Activated CD4-positive, alpha-beta T cell treated with anti-CD3 and anti-CD28 coated beads for 36 hours (primary cell): ENCODE measurements at regions of chr1 and their contacts with region 1.

Region 1: GRCh38 chr1:145978854-145979759 is 14.6 kb downstream of the POLR3GL start:
- DNase-seq: peak; percentile 91
- ATAC-seq: peak; percentile 86
- H3K4me3 Mint-ChIP-seq: no peak overlapping the region
- H3K27ac Mint-ChIP-seq: no peak overlapping the region
- H3K4me1 Mint-ChIP-seq: peaks cover 5% of the 10 kb centered on the region
- H3K27me3 Mint-ChIP-seq: no peaks in the 10 kb centered on the region

Region 2: GRCh38 chr1:145823565-145824498 is 155.3 kb before region 1 on chr1 and contains the starts of genes POLR3C and RNF115:
- CTCF ChIA-PET with region 1: interaction called, 3 read pairs
- POLR2A ChIA-PET with region 1: interaction called, 12 read pairs
- intact Hi-C with region 1: no loop called
- DNase-seq: peak; percentile 91
- ATAC-seq: peak; percentile 67
- H3K4me3 Mint-ChIP-seq: peak within 1 kb of the TSS; percentile 97
- H3K27ac Mint-ChIP-seq: peak within 1 kb of the TSS; percentile 98
- H3K4me1 Mint-ChIP-seq: peaks cover 44% of the 10 kb centered on the region
- H3K27me3 Mint-ChIP-seq: no peaks in the 10 kb centered on the region
- total RNA-seq, gene POLR3C: 34.2 to 42.6 TPM
- total RNA-seq, gene RNF115: 11.8 to 13.9 TPM

Region 3: GRCh38 chr1:145871994-145872924 is 106.8 kb before region 1 on chr1:
- CTCF ChIA-PET with region 1: no interaction called
- POLR2A ChIA-PET with region 1: no interaction called
- intact Hi-C with region 1: no loop called
- DNase-seq: peak; percentile 58
- ATAC-seq: peak; percentile 81
- H3K4me3 Mint-ChIP-seq: peak overlapping the region; percentile 63
- H3K27ac Mint-ChIP-seq: peak overlapping the region; percentile 61
- H3K4me1 Mint-ChIP-seq: peaks cover 11% of the 10 kb centered on the region
- H3K27me3 Mint-ChIP-seq: peaks cover 10% of the 10 kb centered on the region

Region 4: GRCh38 chr1:145927063-145927886 is 51.8 kb before region 1 on chr1 and contains the start of gene RBM8A:
- CTCF ChIA-PET with region 1: interaction called, 17 read pairs
- POLR2A ChIA-PET with region 1: interaction called, 3 read pairs
- intact Hi-C with region 1: loop called (anchors 1 to 2 kb)
- DNase-seq: peak; percentile 96
- ATAC-seq: peak; percentile 97
- H3K4me3 Mint-ChIP-seq: no peak within 1 kb of the TSS
- H3K27ac Mint-ChIP-seq: no peak within 1 kb of the TSS
- H3K4me1 Mint-ChIP-seq: peaks cover 28% of the 10 kb centered on the region
- H3K27me3 Mint-ChIP-seq: no peaks in the 10 kb centered on the region
- total RNA-seq, gene RBM8A: 293 to 330 TPM

Region 5: DNA sequence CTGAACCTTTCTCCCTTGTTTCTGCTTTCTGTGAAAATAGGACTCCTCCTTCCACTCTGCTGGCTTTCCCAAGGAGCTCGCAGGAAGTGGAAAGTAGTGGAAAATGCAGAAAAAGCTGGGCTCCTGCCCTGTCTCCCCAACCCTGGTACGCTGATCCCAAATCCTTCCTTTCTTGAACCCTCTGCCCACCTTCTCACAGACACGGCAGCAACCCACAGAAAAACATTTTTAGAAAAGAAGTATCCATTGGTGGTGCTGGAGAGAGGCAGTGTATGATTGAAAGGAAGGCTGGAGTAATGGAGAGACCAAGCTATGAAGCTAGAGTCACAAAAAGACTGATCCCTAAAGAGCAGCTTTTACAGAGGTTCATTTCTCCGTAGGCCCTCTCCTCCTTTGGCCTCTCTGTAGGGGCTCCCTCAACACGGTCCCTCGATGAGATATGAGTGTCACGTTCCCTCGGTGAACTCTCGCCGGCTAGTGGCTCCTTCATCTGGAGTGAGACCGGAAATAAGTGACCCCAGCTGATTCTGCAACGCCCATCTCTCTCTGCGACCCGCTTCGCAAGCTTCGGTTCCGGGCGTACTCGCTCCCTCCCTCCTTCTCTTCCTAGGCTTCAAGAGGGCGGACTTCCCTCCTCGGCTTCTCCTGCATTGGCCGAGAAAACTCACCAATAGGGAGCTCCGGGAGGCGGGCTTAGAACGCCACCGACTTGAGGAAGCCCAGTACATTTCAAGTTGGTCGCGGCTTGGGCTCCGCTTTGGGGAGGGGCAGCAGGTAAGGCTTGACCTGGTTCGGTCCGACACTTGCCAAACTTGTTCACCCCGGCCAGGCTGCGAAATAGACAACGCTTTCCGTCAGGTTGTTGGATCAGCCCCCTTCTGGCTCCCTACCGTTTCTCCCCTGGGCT is 14.9 kb before region 1 on chr1 and contains the starts of genes ANKRD34A and POLR3GL:
- CTCF ChIA-PET with region 1: interaction called, 46 read pairs
- POLR2A ChIA-PET with region 1: interaction called, 14 read pairs
- intact Hi-C with region 1: loop called (anchors 1 to 2 kb)
- DNase-seq: peak; percentile 95
- ATAC-seq: peak; percentile 88
- H3K4me3 Mint-ChIP-seq: peak within 1 kb of the TSS; percentile 85
- H3K27ac Mint-ChIP-seq: peak within 1 kb of the TSS; percentile 87
- H3K4me1 Mint-ChIP-seq: peaks cover 33% of the 10 kb centered on the region
- H3K27me3 Mint-ChIP-seq: no peaks in the 10 kb centered on the region
- total RNA-seq, gene ANKRD34A: 5.8 to 6.1 TPM
- total RNA-seq, gene POLR3GL: 19.3 to 22.4 TPM

Region 6: GRCh38 chr1:146007506-146008133 is 28.5 kb after region 1 on chr1:
- CTCF ChIA-PET with region 1: interaction called, 119 read pairs
- POLR2A ChIA-PET with region 1: interaction called, 5 read pairs
- intact Hi-C with region 1: loop called (anchors 1 kb)
- DNase-seq: no peak
- ATAC-seq: no peak
- H3K4me3 Mint-ChIP-seq: peak overlapping the region; percentile 58
- H3K27ac Mint-ChIP-seq: peak overlapping the region; percentile 76
- H3K4me1 Mint-ChIP-seq: peaks cover 38% of the 10 kb centered on the region
- H3K27me3 Mint-ChIP-seq: no peaks in the 10 kb centered on the region

Region 7: DNA sequence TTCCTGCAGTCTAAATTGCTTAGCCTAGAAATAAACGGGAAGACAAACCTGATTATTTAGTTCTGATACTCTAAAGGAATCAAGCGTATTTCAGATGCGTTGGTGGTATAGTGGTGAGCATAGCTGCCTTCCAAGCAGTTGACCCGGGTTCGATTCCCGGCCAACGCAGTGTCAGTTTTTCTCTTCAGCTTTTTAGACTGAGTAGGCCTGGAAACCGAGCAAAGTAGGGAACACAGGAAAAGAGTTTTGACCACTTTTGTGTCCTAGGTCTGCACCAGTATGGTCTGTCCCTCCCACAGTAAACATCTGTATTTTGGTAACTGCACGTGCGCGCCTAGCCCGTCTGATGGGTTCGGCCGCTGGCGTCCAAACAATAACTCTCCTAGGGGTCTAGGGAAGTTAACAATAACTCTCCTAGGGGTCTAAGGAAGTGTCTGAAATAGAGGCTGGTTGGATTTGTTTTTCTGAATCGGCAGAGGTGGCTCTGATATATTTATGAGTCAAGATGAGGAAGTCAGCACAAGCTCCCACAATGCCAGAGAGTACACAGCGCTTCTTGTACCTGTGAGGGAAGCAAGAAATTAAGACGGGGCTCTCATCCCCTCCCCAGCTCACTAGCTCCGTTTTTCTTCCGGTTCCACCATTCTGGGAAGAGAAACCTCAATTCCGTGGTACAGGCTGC is 58.0 kb after region 1 on chr1:
- CTCF ChIA-PET with region 1: interaction called, 76 read pairs
- POLR2A ChIA-PET with region 1: interaction called, 14 read pairs
- intact Hi-C with region 1: loop called in 1 of 2 experiments (anchors 1 kb)
- DNase-seq: peak; percentile 91
- ATAC-seq: peak; percentile 45
- H3K4me3 Mint-ChIP-seq: peak overlapping the region; percentile 95
- H3K27ac Mint-ChIP-seq: peak overlapping the region; percentile 98
- H3K4me1 Mint-ChIP-seq: peaks cover 36% of the 10 kb centered on the region
- H3K27me3 Mint-ChIP-seq: peaks cover 2% of the 10 kb centered on the region